Activated T-helper 2 cell treated with anti-CD3 and anti-CD28 coated beads, Interferon-gamma antibody, Interleukin-2, Interleukin-4, amounts not matched to agents 10 μg/mL and 5 μg/mL and 100 μg/mL, durations not matched to agents 14 hours and 24 hours and 36 hours (primary cell): ENCODE measurements at regions of chr16 and their contacts with region 1.

Region 1: DNA sequence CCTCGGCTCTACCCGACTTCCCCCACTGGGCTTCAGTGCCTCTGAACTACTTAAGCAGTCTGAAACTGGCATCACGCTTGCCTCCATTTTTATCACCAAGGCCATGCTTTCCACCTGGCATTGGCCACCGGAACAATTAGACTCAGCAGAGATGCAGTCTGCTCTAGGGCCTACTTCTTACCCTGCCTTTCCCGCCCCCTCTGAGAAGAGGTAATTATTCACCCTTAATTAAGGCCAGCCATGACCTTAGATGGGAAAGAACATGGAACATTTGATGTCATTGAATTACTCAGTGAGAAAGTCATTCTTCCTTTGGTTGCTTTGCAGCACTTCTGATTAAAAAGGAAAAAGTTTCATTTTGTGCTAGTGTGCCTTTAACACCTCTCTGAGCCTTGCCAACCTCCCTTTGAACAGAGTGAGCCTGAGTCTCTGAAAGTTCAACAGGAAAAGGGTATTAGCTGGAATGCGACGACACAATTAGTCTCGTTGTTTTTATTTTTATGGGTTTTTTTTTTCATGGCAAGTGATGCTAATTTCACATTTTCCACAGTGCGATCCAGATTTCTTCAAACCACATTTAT is 60.9 kb upstream of the TNRC6A start:
- DNase-seq: no peak
- H3K4me3 Mint-ChIP-seq: peak overlapping the region; percentile 46
- H3K27ac Mint-ChIP-seq: peak overlapping the region; percentile 93
- H3K4me1 Mint-ChIP-seq: peaks cover 26% of the 10 kb centered on the region
- H3K27me3 Mint-ChIP-seq: no peaks in the 10 kb centered on the region

Region 2: GRCh38 chr16:24580665-24581064 is 87.9 kb before region 1 on chr16:
- intact Hi-C with region 1: loop called (anchors 10 kb)
- DNase-seq: no peak
- H3K4me3 Mint-ChIP-seq: no peak overlapping the region
- H3K27ac Mint-ChIP-seq: no peak overlapping the region
- H3K4me1 Mint-ChIP-seq: peaks cover 3% of the 10 kb centered on the region
- H3K27me3 Mint-ChIP-seq: peaks cover 4% of the 10 kb centered on the region

Region 3: DNA sequence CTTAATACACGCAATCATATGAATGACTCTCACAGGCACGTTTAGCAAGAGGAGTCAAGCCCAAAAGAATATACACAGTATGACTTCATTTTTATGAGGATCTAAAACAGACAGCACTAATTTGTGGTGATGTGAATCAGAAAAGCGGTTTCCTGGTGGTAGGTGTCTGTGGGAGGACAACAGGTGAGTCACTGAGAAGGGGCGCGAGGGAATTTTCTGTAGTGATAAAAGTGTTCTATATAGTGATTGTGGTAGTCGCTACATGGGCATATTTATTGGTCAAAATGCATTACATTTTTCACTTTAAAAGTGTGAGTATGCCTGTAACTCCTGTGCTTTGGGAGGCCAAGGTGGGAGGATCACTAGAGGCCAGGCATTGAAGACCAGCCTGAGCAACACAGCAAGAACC is 53.3 kb after region 1 on chr16:
- intact Hi-C with region 1: loop called (anchors 2 kb)
- DNase-seq: no peak
- H3K4me3 Mint-ChIP-seq: no peak overlapping the region
- H3K27ac Mint-ChIP-seq: peak overlapping the region; percentile 77
- H3K4me1 Mint-ChIP-seq: peaks cover 9% of the 10 kb centered on the region
- H3K27me3 Mint-ChIP-seq: peaks cover 3% of the 10 kb centered on the region

Region 4: DNA sequence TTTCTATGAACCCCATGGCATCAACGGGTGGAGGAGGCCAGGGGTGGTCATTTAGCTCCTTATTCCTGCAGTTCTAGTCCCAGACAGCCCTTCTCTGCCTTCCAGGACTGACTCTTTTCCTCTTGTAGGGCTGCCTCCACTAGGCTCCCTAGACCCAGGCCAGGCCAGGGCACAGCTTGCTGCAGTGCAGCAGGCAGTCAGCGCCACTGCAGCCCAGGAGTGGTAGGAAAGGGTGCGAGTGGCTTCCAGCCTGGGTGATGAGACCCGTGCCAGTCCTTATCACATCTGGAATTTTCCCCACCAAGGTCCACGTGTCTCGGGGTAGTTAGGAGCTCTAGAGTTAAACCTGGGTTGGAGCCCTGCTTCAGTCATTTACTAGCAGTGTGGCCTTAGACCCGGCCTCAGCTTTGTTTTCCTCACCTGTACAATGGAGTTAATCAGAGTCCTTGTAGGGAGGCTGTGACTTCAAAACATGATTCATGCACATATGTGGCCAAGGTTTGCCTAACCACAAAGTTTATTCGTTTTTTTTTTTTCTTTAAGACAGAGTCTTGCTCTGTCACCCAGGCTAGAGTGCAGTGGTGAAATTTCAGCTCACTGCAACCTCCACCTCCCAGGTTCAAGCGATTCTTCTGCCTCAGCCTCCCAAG is 181.8 kb after region 1 on chr16:
- intact Hi-C with region 1: loop called (anchors 2 kb)
- DNase-seq: no peak
- H3K4me3 Mint-ChIP-seq: no peak overlapping the region
- H3K27ac Mint-ChIP-seq: peak overlapping the region; percentile 50
- H3K4me1 Mint-ChIP-seq: peaks cover 19% of the 10 kb centered on the region
- H3K27me3 Mint-ChIP-seq: no peaks in the 10 kb centered on the region

Region 5: DNA sequence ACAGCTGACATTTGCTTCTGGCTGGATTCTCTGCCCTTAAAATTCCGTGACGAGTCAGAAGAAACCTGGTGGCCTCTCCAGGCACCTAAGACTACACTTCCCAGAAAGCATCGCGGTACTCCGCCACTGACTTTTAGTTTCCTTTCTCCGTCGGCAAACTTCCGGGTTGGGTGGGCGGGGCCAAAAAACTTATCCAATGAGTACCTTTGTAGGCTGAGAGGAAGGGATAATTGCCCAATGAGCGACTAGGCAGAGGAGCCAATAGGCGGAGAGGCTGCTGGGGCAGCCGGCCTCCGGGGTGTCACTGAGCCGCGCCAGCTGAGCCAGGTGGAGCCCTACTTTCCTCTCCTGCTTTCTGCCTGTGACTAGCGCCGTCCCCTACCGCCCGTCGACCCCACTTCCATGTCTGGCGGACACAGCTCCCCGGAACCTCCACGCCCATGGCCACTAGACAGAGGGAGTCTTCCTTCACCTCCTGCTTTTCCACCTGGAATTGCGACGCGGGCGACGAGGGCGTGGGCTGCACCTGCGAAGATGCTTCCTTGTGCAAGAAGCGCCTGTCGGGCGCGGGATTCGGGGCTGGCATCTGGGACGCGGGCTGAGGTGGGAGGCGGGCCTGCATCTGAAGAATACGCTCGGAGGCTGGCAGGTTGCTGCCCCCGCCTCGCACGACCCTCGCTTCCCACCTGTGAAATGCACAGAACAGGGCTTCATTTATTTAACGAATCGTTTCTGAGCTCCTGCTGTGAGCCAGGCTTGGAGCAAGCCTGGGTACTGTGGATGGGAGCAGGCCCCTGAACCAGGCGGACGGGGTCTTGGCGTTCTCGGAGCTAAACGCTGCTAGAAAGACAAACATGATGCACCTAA is 363.1 kb after region 1 on chr16:
- intact Hi-C with region 1: loop called (anchors 10 kb)
- DNase-seq: peak; percentile 89
- H3K4me3 Mint-ChIP-seq: peak overlapping the region; percentile 92
- H3K27ac Mint-ChIP-seq: peak overlapping the region; percentile 99
- H3K4me1 Mint-ChIP-seq: peaks cover 30% of the 10 kb centered on the region
- H3K27me3 Mint-ChIP-seq: no peaks in the 10 kb centered on the region

Region 6: GRCh38 chr16:25966172-25967097 is 1297.9 kb after region 1 on chr16:
- intact Hi-C with region 1: loop called (anchors 10 kb)
- DNase-seq: no peak
- H3K4me3 Mint-ChIP-seq: no peak overlapping the region
- H3K27ac Mint-ChIP-seq: peak overlapping the region; percentile 63
- H3K4me1 Mint-ChIP-seq: peaks cover 29% of the 10 kb centered on the region
- H3K27me3 Mint-ChIP-seq: no peaks in the 10 kb centered on the region